ENCODE measurements at regions of chr3 and their contacts with region 1.

Region 1: DNA sequence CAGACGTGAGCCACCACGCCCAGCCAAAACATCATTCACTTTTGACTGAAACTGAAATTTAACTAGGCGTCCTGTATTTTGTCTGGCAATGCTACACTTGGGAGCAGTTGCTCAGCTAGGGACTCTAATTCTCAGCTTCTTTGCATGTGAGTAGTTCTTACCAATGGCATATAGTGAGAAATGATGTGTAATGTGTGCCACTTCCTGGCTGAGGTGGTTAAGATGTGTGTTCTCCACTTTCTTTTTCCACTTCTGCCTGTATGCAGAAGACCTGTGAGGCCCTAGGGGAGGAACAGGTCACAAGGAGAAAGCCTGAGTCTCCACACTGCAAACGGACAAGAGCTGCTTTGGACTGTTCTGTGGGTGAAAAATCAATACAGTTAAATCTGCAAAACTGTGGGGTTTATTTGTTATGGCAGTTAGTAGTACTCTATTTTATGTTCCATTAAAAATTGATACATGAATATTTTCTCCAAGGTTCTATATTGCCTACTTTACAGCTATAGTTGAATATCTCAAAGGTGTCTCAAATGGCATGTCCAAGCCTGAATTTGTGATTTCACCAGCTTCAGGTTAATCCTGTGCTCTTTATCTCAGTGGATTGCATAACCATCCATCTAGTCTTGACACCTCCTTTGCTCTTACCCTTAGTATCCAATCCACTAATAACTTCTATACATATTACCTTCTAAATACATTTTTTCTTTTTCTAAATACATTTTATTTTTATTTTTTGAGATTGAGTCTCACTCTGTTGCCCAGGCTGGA is 59.3 kb downstream of the NR1D2 start:
- DNase-seq: peak; percentile 55
- ATAC-seq: peak; percentile 98
- H3K4me3 Mint-ChIP-seq: no peak overlapping the region
- H3K27ac Mint-ChIP-seq: no peak overlapping the region
- H3K4me1 Mint-ChIP-seq: peaks cover 18% of the 10 kb centered on the region
- H3K27me3 Mint-ChIP-seq: peaks cover 7% of the 10 kb centered on the region

Region 2: DNA sequence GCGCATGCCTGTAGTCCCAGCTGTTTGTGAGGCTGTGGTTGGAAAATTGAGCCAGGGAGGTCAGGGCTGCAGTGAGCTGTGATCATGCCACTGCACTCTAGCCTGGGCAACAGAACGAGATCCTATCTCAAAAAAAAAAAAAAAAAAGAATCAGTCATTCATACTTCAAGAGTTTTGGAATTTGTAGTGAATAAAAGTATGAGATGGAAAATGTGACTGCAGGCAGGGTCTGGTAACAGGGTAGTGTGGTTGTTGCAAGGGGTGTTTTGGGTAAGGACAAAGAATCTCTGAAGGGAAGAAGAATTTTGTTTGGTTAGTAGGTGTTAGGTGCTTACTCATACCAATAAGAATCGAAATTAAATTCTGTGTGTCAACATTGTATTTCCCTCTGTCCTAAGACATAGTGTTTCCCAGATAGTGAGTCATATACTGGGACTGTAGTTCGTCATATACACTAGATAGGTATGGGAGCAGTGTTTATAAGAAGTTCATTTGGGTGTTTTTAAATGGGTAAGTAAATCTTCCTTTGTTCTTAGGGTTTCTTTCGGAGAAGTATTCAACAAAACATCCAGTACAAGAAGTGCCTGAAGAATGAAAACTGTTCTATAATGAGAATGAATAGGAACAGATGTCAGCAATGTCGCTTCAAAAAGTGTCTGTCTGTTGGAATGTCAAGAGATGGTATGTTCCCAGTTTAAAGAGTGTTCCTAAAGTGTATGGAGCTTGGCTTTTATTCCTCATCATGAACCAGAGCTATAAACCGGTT is 45.0 kb before region 1 on chr3:
- CTCF ChIA-PET with region 1: interaction called, 4 read pairs
- POLR2A ChIA-PET with region 1: no interaction called
- intact Hi-C with region 1: loop called in 1 of 2 experiments (anchors 1 kb)
- DNase-seq: peak; percentile 44
- ATAC-seq: peak; percentile 92
- H3K4me3 Mint-ChIP-seq: no peak overlapping the region
- H3K27ac Mint-ChIP-seq: peak overlapping the region; percentile 62
- H3K4me1 Mint-ChIP-seq: peaks cover 34% of the 10 kb centered on the region
- H3K27me3 Mint-ChIP-seq: no peaks in the 10 kb centered on the region

Region 3: GRCh38 chr3:24048843-24049242 is 44.5 kb after region 1 on chr3:
- CTCF ChIA-PET with region 1: no interaction called
- POLR2A ChIA-PET with region 1: no interaction called
- intact Hi-C with region 1: loop called in 1 of 2 experiments (anchors 1 kb)
- DNase-seq: no peak
- ATAC-seq: no peak
- H3K4me3 Mint-ChIP-seq: no peak overlapping the region
- H3K27ac Mint-ChIP-seq: no peak overlapping the region
- H3K4me1 Mint-ChIP-seq: peaks cover 7% of the 10 kb centered on the region
- H3K27me3 Mint-ChIP-seq: peaks cover 2% of the 10 kb centered on the region

Region 4: GRCh38 chr3:24101676-24102168 is 97.4 kb after region 1 on chr3:
- CTCF ChIA-PET with region 1: no interaction called
- POLR2A ChIA-PET with region 1: no interaction called
- intact Hi-C with region 1: no loop called
- DNase-seq: peak; percentile 7
- ATAC-seq: peak; percentile 66
- H3K4me3 Mint-ChIP-seq: no peak overlapping the region
- H3K27ac Mint-ChIP-seq: no peak overlapping the region
- H3K4me1 Mint-ChIP-seq: no peaks in the 10 kb centered on the region
- H3K27me3 Mint-ChIP-seq: peaks cover 6% of the 10 kb centered on the region

Region 5: DNA sequence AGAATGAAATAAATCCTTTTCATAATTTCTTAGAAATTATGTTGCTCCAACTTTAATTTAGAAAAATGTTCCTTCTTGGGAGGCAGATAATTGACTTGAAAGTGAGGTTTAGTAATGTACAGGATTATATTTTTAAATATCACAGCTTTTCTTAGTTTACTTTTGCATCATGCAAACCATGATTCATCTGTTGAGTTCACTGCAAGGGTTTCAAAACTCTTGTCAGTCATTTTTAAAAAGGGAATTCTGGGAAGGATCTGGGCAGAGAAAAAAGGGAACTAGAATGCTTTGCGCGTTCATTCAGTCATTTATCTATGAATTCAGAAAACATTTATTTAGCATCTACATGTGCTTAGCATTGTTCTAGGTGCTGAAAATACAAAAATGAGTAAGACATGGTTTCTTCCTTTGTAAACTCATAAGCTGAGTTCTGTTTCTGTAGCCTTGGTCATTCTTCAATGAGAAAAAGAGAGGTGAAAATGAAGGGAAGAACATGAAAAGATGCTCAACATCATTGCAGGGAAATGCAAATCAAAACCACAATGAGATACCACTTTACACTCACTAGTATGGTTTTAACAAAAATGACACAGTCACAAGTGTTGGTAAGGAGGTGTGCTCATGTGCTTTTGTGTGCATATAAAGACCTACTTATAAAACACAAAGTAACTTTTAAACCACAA is 149.8 kb after region 1 on chr3:
- CTCF ChIA-PET with region 1: no interaction called
- POLR2A ChIA-PET with region 1: no interaction called
- intact Hi-C with region 1: loop called (anchors 1 kb)
- DNase-seq: no peak
- ATAC-seq: peak; percentile 80
- H3K4me3 Mint-ChIP-seq: no peak overlapping the region
- H3K27ac Mint-ChIP-seq: peak overlapping the region; percentile 7
- H3K4me1 Mint-ChIP-seq: peaks cover 28% of the 10 kb centered on the region
- H3K27me3 Mint-ChIP-seq: peaks cover 7% of the 10 kb centered on the region

Region 6: GRCh38 chr3:24494618-24495325 is 490.4 kb after region 1 on chr3 and contains the start of gene THRB:
- CTCF ChIA-PET with region 1: no interaction called
- POLR2A ChIA-PET with region 1: no interaction called
- intact Hi-C with region 1: loop called (anchors 10 kb)
- DNase-seq: peak; percentile 34
- ATAC-seq: peak; percentile 23
- H3K4me3 Mint-ChIP-seq: peak within 1 kb of the TSS; percentile 30
- H3K27ac Mint-ChIP-seq: no peak within 1 kb of the TSS
- H3K4me1 Mint-ChIP-seq: peaks cover 2% of the 10 kb centered on the region
- H3K27me3 Mint-ChIP-seq: peaks cover 51% of the 10 kb centered on the region
- total RNA-seq, gene THRB: not detected

Region 7: DNA sequence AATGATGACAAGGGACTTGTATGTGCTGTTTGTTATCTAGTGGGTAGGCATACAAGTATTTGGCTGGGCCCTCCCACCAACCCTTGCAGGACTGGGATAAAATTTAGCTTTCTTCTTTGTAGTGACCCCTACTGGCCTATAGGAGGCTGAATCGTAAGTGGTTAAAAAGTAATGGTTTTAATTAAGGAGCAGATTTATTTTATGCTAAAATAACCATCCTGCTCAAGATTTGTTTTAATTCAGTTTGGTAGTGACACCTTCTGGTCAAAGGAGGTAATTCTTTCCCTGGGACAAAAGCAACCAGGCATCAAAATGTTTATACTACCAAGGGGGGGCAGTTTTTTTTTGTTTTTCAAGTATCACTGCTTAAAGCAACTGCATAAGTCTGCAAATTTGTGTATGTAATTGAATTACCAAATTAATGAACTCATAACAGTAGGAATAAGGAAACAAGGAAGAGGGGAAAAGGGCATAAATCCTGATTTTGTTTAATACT is 1589.7 kb after region 1 on chr3:
- CTCF ChIA-PET with region 1: no interaction called
- POLR2A ChIA-PET with region 1: no interaction called
- intact Hi-C with region 1: loop called in 1 of 2 experiments (anchors 10 kb)
- DNase-seq: peak; percentile 12
- ATAC-seq: peak; percentile 56
- H3K4me3 Mint-ChIP-seq: no peak overlapping the region
- H3K27ac Mint-ChIP-seq: no peak overlapping the region
- H3K4me1 Mint-ChIP-seq: peaks cover 2% of the 10 kb centered on the region
- H3K27me3 Mint-ChIP-seq: no peaks in the 10 kb centered on the region

Measured in activated CD4-positive, alpha-beta T cell treated with anti-CD3 and anti-CD28 coated beads for 36 hours (primary cell).